Endothelial cell of umbilical vein (primary cell): ENCODE measurements at regions of chr10 and their contacts with region 1.

Region 1: GRCh38 chr10:107379601-107380000 is 215.1 kb upstream of the SORCS1 start:
- DNase-seq: no peak
- H3K4me3 ChIP-seq: no peak overlapping the region
- H3K27ac ChIP-seq: no peak overlapping the region
- H3K4me1 ChIP-seq: no peaks in the 10 kb centered on the region
- H3K27me3 ChIP-seq: no peaks in the 10 kb centered on the region
- CTCF ChIP-seq: no peak
- POLR2A ChIP-seq: no peak

Region 2: GRCh38 chr10:107409522-107409921 is 29.9 kb after region 1 on chr10:
- CTCF ChIA-PET with region 1: no interaction called
- POLR2A ChIA-PET with region 1: no interaction called
- dilution Hi-C with region 1: no loop called
- intact Hi-C with region 1: loop called (anchors 1 kb)
- DNase-seq: no peak
- H3K4me3 ChIP-seq: no peak overlapping the region
- H3K27ac ChIP-seq: no peak overlapping the region
- H3K4me1 ChIP-seq: no peaks in the 10 kb centered on the region
- H3K27me3 ChIP-seq: no peaks in the 10 kb centered on the region
- CTCF ChIP-seq: no peak
- POLR2A ChIP-seq: no peak